Head of caudate nucleus (tissue), 42 donors: ENCODE measurements at regions of chr11 and their contacts with region 1.

Region 1: DNA sequence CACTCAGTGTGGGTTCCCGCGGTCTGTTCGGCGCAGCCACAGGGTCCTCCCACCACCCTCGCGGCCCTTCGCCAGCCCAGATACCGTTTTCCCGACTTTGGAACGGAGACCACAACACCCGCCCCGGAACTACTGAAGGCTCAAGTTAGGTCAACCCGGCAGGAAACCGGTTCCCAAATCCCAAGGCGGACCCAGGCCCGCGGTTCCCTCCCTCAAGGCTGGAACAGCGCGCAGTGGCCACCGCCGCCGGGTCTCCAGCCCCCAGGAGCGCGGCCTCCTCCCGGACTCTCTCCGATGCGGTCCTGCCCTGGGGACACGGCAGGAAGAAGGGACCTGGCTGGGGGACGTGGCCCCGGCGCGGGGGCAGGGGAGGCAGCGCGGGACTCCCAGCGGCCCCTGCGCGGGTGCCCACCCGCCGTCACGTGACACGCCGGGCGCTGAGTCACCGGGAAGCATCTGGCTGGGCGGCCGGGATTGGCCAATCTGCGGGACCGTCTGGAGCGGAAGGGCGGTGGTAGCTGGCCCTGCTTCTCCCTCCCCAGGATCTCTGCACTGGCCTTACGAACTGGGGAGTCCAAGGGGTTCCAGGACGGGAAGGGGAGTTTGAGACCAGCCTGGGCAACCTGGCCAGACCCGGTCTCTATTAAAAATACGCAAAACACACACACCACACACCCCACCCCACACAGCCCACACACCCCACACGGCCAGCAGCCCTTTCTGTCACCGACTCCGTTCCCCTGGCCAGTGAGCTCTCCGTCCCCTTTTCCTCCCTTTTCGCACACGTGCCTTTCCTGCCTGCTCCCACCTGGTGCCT is 21.5 kb upstream of the MALAT1 start:
- DNase-seq: peak; percentile 90 to 99 (median 96)

Region 2: GRCh38 chr11:65497141-65498041 is 20.0 kb after region 1 on chr11:
- intact Hi-C with region 1: loop called (anchors 1 kb)
- DNase-seq: peak; percentile 95 to 99 (median 98)

Region 3: GRCh38 chr11:65588199-65589054 is 111.1 kb after region 1 on chr11:
- intact Hi-C with region 1: no loop called
- DNase-seq: peak in 26 of 42 donors; percentile 45 to 80 (median 62)